BJ (cell line): ENCODE measurements at regions of chr5 and their contacts with region 1.

Region 1: DNA sequence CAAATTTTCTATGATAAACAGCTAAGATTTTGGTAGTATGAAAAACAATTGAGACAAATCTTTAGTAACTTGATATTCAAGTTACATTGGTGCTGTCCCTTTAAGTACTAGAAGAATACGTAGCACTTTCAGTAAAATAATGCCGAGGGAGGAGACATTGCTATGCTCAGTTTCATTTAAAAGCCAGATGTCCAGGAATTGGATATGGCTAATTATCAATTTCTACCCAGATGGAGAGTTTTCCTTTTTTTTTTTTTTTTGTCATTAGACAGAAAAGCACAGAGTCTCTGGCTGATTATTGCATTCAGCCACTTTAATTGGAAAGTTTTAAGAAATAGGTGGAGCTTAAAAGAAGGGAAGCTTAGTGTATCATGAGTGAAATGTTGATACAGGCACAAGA is 40.4 kb upstream of the APC start:
- DNase-seq: no peak
- H3K4me3 ChIP-seq: no peak overlapping the region
- H3K27me3 ChIP-seq: no peaks in the 10 kb centered on the region
- CTCF ChIP-seq: no peak

Region 2: GRCh38 chr5:112560371-112560770 is 137.0 kb before region 1 on chr5:
- CTCF ChIA-PET with region 1: no interaction called
- POLR2A ChIA-PET with region 1: no interaction called
- DNase-seq: no peak
- H3K4me3 ChIP-seq: no peak overlapping the region
- H3K27me3 ChIP-seq: no peaks in the 10 kb centered on the region
- CTCF ChIP-seq: no peak

Region 3: DNA sequence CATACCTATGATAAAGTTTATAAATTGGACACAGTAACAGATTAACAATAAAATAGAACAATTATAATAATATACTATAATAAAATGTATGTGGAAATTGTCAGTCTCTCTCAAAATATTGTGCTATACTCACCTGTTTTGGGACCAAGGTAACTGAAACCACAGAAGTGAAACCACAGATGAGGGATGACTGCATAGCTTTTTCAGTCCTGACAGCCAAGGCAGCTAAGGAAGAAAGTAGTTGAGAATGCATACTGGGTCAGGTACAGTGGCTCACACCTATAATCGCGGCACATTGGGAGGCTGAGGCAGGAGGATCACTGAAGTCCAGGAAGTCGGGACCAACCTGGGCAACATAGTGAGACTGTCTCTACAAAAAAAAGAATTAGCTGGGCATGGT is 172.6 kb after region 1 on chr5:
- CTCF ChIA-PET with region 1: no interaction called
- POLR2A ChIA-PET with region 1: interaction called, 12 read pairs
- DNase-seq: no peak
- H3K4me3 ChIP-seq: no peak overlapping the region
- H3K27me3 ChIP-seq: no peaks in the 10 kb centered on the region
- CTCF ChIP-seq: no peak